ENCODE measurements at regions of chr17 and their contacts with region 1.

Region 1: GRCh38 chr17:3474212-3474611 is 1.6 kb upstream of the ASPA start:
- DNase-seq: no peak
- H3K4me3 ChIP-seq: no peak overlapping the region
- H3K27ac ChIP-seq: no peak overlapping the region
- H3K4me1 ChIP-seq: no peaks in the 10 kb centered on the region
- H3K27me3 ChIP-seq: no peaks in the 10 kb centered on the region
- CTCF ChIP-seq: no peak

Region 2: GRCh38 chr17:2837147-2837561 is 637.1 kb before region 1 on chr17:
- CTCF ChIA-PET with region 1: no interaction called
- dilution Hi-C with region 1: no loop called
- in situ Hi-C with region 1: no loop called
- intact Hi-C with region 1: loop called (anchors 10 kb)
- DNase-seq: no peak
- H3K4me3 ChIP-seq: no peak overlapping the region
- H3K27ac ChIP-seq: no peak overlapping the region
- H3K4me1 ChIP-seq: no peaks in the 10 kb centered on the region
- H3K27me3 ChIP-seq: no peaks in the 10 kb centered on the region
- CTCF ChIP-seq: no peak